PC-9 (cell line): ENCODE measurements at regions of chr4 and their contacts with region 1.

Region 1: DNA sequence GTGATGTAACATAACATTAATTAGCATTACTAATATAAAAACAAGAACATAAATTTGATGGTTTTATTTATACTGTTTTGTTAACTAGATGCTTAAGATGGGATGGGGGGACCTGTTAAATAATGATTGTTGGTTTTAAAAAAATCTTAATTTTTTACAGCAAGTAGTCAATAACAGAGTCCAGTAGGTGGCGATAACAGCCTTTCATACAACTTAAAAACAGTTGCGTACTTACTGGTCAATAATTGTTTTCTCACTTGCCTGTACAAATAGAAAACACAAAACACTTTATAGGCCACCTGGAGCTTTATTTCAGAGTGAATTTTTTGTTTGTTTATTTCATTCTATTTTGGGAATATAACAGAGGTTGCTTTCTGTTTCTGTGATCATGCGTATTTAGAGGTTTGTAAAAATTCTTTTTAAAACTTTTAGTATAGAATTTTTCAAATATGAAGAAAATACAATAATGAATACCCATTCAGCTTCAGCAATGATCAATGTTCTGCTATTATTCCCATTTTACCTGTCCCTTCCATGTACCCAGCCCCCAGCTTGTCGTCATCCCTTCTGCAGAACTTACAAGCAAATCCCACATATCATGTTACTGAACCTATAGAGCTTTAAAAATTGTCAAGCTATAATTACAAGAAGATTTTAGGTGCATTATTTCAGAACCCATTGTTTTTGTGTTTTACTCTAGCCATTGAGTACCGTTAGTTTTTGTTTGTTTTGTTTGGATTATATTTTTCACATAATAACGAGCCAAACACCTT is 97.1 kb downstream of the MRPL1 start:
- DNase-seq: no peak
- H3K4me3 ChIP-seq: no peak overlapping the region
- H3K27ac ChIP-seq: no peak overlapping the region
- H3K4me1 ChIP-seq: no peaks in the 10 kb centered on the region
- H3K27me3 ChIP-seq: no peaks in the 10 kb centered on the region
- CTCF ChIP-seq: peak; percentile 76

Region 2: GRCh38 chr4:78592104-78592783 is 632.5 kb after region 1 on chr4:
- CTCF ChIA-PET with region 1: no interaction called
- POLR2A ChIA-PET with region 1: interaction called, 3 read pairs
- intact Hi-C with region 1: loop called (anchors 10 kb)
- DNase-seq: no peak
- H3K4me3 ChIP-seq: no peak overlapping the region
- H3K27ac ChIP-seq: no peak overlapping the region
- H3K4me1 ChIP-seq: no peaks in the 10 kb centered on the region
- H3K27me3 ChIP-seq: no peaks in the 10 kb centered on the region
- CTCF ChIP-seq: peak; percentile 47

Region 3: GRCh38 chr4:78864405-78865024 is 904.8 kb after region 1 on chr4:
- CTCF ChIA-PET with region 1: interaction called, 3 read pairs
- POLR2A ChIA-PET with region 1: no interaction called
- intact Hi-C with region 1: loop called (anchors 5 kb)
- DNase-seq: peak in 1 of 2 experiments; percentile 59
- H3K4me3 ChIP-seq: no peak overlapping the region
- H3K27ac ChIP-seq: no peak overlapping the region
- H3K4me1 ChIP-seq: no peaks in the 10 kb centered on the region
- H3K27me3 ChIP-seq: no peaks in the 10 kb centered on the region
- CTCF ChIP-seq: peak; percentile 72